Activated T-helper 2 cell treated with anti-CD3 and anti-CD28 coated beads, Interferon-gamma antibody, Interleukin-2, Interleukin-4, amounts not matched to agents 10 μg/mL and 5 μg/mL and 100 μg/mL, durations not matched to agents 14 hours and 24 hours and 36 hours (primary cell): ENCODE measurements at regions of chrX and their contacts with region 1.

Region 1: DNA sequence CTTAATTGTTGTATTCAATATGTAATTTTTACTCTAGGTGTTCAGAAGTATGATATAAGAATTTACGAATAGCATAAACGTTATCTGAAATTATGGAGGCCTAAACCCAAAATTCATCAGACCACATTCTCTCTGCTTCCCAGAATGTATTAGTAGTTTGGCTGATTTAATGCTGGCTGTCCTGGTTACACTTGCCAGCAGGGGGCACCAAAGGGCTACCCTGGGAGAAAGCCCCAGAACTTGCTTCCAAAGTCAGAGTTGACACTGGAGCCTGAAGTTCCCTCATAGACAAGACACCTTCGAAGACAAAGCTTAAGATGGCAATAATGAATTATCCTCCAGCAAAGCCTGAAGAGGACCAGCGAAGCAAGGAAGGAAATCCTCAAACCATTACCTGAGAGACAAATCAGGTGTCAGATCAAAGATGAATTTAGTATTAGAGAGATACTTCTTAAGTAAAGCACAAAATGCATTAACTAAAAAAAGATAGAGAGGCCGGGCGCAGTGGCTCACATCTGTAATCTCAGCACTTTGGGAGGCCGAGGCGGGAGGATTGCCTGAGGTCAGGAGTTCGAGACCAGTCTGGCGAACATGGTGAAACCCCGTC is 11.3 kb upstream of the ANOS1 start:
- DNase-seq: peak; percentile 10
- H3K4me3 Mint-ChIP-seq: no peak overlapping the region
- H3K27ac Mint-ChIP-seq: no peak overlapping the region
- H3K4me1 Mint-ChIP-seq: no peaks in the 10 kb centered on the region
- H3K27me3 Mint-ChIP-seq: no peaks in the 10 kb centered on the region

Region 2: DNA sequence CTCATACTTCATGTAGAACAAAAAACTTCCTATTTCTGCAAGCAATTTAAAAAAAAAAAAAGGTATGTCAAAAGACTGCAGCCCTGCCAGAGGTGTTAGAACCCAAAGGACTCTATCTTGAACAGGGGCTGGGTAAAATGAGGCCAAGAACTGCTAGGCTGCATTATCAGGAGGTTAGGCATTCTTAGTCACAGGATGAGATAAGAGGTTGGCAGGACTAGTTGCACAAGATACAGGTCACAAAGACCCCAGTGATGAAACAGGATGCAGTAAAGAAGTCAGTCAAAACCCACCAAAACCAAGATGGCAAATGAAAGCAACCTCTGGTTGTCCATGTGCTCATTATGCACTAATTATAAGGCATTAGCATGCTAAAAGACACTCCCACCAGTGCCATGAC is 115.4 kb before region 1 on chrX:
- intact Hi-C with region 1: no loop called
- DNase-seq: no peak
- H3K4me3 Mint-ChIP-seq: no peak overlapping the region
- H3K27ac Mint-ChIP-seq: no peak overlapping the region
- H3K4me1 Mint-ChIP-seq: no peaks in the 10 kb centered on the region
- H3K27me3 Mint-ChIP-seq: no peaks in the 10 kb centered on the region

Region 3: GRCh38 chrX:8731559-8732395 is 11.5 kb before region 1 on chrX and contains the start of gene ANOS1:
- intact Hi-C with region 1: no loop called
- DNase-seq: no peak
- H3K4me3 Mint-ChIP-seq: no peak within 1 kb of the TSS
- H3K27ac Mint-ChIP-seq: no peak within 1 kb of the TSS
- H3K4me1 Mint-ChIP-seq: no peaks in the 10 kb centered on the region
- H3K27me3 Mint-ChIP-seq: peaks cover 27% of the 10 kb centered on the region
- total RNA-seq, gene ANOS1: not detected in 2 replicates

Region 4: GRCh38 chrX:8815464-8816065 is 72.3 kb after region 1 on chrX:
- intact Hi-C with region 1: loop called (anchors 1 kb)
- DNase-seq: no peak
- H3K4me3 Mint-ChIP-seq: no peak overlapping the region
- H3K27ac Mint-ChIP-seq: no peak overlapping the region
- H3K4me1 Mint-ChIP-seq: no peaks in the 10 kb centered on the region
- H3K27me3 Mint-ChIP-seq: peaks cover 5% of the 10 kb centered on the region